Mammary epithelial cell (primary cell): ENCODE measurements at regions of chr3 and their contacts with region 1.

Region 1: GRCh38 chr3:26484140-26484539 is 138.4 kb upstream of the LRRC3B start:
- DNase-seq: no peak
- H3K4me3 ChIP-seq: no peak overlapping the region
- H3K27ac ChIP-seq: no peak overlapping the region
- H3K4me1 ChIP-seq: no peaks in the 10 kb centered on the region
- H3K27me3 ChIP-seq: no peaks in the 10 kb centered on the region
- CTCF ChIP-seq: no peak

Region 2: GRCh38 chr3:26522919-26523318 is 38.8 kb after region 1 on chr3:
- CTCF ChIA-PET with region 1: no interaction called
- dilution Hi-C with region 1: loop called (anchors 5 kb)
- in situ Hi-C with region 1: no loop called
- intact Hi-C with region 1: no loop called
- DNase-seq: no peak
- H3K4me3 ChIP-seq: no peak overlapping the region
- H3K27ac ChIP-seq: no peak overlapping the region
- H3K4me1 ChIP-seq: no peaks in the 10 kb centered on the region
- H3K27me3 ChIP-seq: no peaks in the 10 kb centered on the region
- CTCF ChIP-seq: no peak

Region 3: DNA sequence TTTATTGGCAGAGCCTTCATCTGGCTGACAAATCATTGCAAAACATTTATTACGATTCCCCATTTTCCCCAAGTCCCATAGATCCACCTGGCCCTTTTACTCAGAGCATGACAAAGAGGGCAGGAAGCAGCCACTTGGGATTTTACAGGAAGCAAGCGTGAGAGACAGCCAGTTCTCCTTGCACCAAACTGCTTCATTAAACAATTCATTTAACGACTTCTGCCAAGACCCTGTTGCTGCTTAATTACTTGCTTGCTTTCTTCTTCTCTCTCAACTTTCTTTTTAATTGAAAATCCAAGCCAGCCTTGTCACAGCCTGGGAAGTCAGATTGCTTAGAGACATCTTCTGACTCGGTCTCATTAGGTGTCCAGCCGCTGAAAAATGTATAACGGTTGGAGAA is 436.5 kb after region 1 on chr3:
- CTCF ChIA-PET with region 1: no interaction called
- dilution Hi-C with region 1: no loop called
- in situ Hi-C with region 1: no loop called
- intact Hi-C with region 1: no loop called
- DNase-seq: no peak
- H3K4me3 ChIP-seq: no peak overlapping the region
- H3K27ac ChIP-seq: no peak overlapping the region
- H3K4me1 ChIP-seq: no peaks in the 10 kb centered on the region
- H3K27me3 ChIP-seq: no peaks in the 10 kb centered on the region
- CTCF ChIP-seq: no peak